ENCODE measurements at regions of chr10 and their contacts with region 1.

Region 1: GRCh38 chr10:71771821-71772617 is 1.3 kb downstream of the VSIR start:
- DNase-seq: no peak
- H3K4me3 ChIP-seq: peak overlapping the region; percentile 76 to 95 (median 85)
- H3K27ac ChIP-seq: peak overlapping the region; percentile 94 to 98 (median 96)
- H3K4me1 ChIP-seq: peaks cover 74 to 94% (median 85%) of the 10 kb centered on the region in 4 donors
- H3K27me3 ChIP-seq: no peaks in the 10 kb centered on the region
- CTCF ChIP-seq: no peak
- EP300 ChIP-seq: no peak
- POLR2A ChIP-seq: peak; percentile 28

Region 2: GRCh38 chr10:71623098-71623985 is 148.7 kb before region 1 on chr10:
- intact Hi-C with region 1: loop called (anchors 5 kb)
- DNase-seq: no peak
- H3K4me3 ChIP-seq: no peak overlapping the region
- H3K27ac ChIP-seq: peak overlapping the region; percentile 84 to 87 (median 85)
- H3K4me1 ChIP-seq: peaks cover 31 to 97% (median 89%) of the 10 kb centered on the region in 4 donors
- H3K27me3 ChIP-seq: no peaks in the 10 kb centered on the region
- CTCF ChIP-seq: peak; percentile 27 to 53 (median 50)
- EP300 ChIP-seq: no peak
- POLR2A ChIP-seq: no peak

Region 3: GRCh38 chr10:71634531-71635164 is 137.4 kb before region 1 on chr10:
- intact Hi-C with region 1: no loop called
- DNase-seq: no peak
- H3K4me3 ChIP-seq: no peak overlapping the region
- H3K27ac ChIP-seq: peak overlapping the region in 1 of 4 donors; percentile 15
- H3K4me1 ChIP-seq: peaks cover 6 to 57% (median 50%) of the 10 kb centered on the region in 4 donors
- H3K27me3 ChIP-seq: no peaks in the 10 kb centered on the region
- CTCF ChIP-seq: no peak
- EP300 ChIP-seq: no peak
- POLR2A ChIP-seq: no peak

Region 4: DNA sequence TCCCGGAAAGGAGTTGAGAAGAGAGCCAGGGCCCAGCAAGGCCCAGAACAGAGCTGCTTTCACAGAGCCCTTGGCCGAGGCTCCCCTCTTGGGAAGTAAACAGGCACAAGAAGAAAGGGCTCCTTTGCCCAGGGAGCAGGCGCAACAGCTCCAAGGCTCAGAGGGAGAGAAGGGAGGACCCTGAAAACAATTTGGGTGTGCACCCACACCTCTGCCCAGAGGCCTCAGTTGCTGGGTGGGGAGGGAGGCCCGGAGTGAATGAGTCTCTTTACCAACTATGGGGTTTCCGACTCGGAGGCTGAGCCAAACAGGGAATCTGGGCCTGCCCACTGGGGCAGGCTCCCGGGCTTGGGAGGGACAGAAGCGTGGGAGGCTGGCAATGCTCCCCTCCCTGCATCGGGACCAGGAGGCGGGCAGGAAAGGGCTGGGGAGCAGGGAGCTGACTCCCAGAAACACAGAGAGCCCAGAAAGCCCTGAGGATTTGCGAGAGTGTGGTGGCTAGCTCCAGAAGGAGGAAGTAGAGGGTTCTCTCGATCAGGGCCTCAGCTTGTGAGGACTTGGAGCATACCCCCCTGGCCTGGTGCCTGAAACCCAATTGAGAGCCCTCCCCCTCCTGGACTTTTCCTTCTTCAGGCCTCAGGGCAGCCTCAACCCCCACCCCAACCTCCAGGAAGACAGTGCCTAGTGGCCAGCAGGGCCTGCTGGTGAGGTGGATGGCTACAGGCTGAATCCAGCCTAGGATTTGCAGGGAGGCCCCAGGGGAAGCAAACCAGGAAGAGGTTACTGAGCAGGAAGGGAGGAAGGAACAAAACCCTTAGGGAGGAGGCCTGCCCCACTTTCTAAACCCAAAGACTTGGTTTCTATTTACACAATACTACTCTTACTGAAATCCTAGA is 58.6 kb before region 1 on chr10:
- intact Hi-C with region 1: loop called (anchors 5 kb)
- DNase-seq: peak; percentile 97
- H3K4me3 ChIP-seq: peak overlapping the region in 3 of 4 donors; percentile 13 to 30 (median 18)
- H3K27ac ChIP-seq: peak overlapping the region; percentile 88 to 93 (median 91)
- H3K4me1 ChIP-seq: peaks cover 55 to 65% (median 64%) of the 10 kb centered on the region in 4 donors
- H3K27me3 ChIP-seq: no peaks in the 10 kb centered on the region
- CTCF ChIP-seq: peak in 1 of 3 experiments; percentile 14
- EP300 ChIP-seq: no peak
- POLR2A ChIP-seq: no peak

Region 5: DNA sequence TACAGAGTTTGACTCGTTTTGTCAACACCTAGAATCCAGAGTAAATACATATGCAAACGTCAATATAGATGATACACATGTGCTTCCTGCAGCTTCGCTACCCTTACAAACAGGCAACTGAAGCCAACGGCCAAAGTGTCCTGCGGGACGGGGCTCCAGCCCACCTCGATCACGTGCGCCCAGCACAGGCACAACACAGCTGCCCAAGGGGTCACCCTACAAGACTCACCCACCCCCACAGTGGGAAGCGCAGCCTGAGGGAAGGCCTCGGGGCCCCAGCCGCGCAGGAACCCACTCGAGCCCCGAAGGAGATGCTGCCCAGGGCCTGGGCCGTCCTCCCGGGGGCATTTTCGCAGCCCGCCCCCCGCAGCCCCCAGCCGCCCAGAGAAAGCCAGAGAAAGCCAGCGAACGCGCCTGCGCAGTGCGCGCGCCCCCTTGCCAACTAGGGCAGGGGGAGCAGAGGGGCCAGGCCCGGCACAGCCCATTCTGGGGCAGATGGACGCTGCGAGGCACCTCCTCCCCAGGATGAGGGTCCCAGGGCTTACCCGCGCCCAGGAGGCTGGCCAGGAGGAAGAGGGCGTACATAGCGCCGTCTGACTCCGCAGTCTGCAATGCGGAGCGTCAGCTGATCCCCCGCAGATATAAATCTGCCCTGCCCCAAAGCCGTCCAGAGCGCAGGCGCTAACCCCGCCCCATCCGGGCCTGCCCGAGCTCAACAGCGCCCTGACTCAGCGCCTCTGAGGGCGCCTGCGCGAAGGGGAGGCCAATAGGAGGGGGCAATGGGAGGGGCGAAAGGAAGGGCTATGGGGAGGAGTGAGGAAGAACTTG is 78.8 kb after region 1 on chr10 and contains the start of gene PSAP:
- intact Hi-C with region 1: no loop called
- DNase-seq: peak; percentile 99
- H3K4me3 ChIP-seq: peak within 1 kb of the TSS; percentile 69 to 92 (median 86)
- H3K27ac ChIP-seq: peak within 1 kb of the TSS; percentile 96 to 98 (median 96)
- H3K4me1 ChIP-seq: peaks cover 43 to 58% (median 51%) of the 10 kb centered on the region in 4 donors
- H3K27me3 ChIP-seq: no peaks in the 10 kb centered on the region
- CTCF ChIP-seq: no peak
- EP300 ChIP-seq: no peak
- POLR2A ChIP-seq: peak; percentile 97
- total RNA-seq, gene PSAP: 537 to 740 (median 698) TPM